ENCODE measurements at regions of chr13 and their contacts with region 1.

Region 1: DNA sequence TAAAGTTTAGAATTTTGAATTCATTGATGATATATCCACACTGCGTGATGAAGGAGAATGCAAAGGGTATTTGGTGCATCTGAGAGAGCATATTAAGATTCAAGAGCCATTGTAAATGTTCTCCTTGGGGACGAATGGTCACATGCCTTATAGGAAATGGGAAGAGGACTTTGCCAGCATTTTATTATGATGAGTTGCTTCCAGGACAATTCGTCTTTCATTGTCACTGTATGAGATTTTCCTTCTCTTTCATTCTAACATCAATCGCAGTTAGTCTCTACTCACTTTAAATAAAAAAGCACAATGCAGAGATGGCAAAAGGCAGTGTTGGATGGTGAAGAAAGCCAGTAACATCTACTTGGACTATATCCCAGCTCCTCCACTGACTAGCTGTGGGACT is 21.4 kb downstream of the WDFY2 start:
- DNase-seq: no peak
- ATAC-seq: no peak
- H3K4me3 ChIP-seq: no peak overlapping the region
- H3K27ac ChIP-seq: no peak overlapping the region
- H3K4me1 ChIP-seq: no peaks in the 10 kb centered on the region
- H3K27me3 ChIP-seq: no peaks in the 10 kb centered on the region
- CTCF ChIP-seq: no peak

Region 2: DNA sequence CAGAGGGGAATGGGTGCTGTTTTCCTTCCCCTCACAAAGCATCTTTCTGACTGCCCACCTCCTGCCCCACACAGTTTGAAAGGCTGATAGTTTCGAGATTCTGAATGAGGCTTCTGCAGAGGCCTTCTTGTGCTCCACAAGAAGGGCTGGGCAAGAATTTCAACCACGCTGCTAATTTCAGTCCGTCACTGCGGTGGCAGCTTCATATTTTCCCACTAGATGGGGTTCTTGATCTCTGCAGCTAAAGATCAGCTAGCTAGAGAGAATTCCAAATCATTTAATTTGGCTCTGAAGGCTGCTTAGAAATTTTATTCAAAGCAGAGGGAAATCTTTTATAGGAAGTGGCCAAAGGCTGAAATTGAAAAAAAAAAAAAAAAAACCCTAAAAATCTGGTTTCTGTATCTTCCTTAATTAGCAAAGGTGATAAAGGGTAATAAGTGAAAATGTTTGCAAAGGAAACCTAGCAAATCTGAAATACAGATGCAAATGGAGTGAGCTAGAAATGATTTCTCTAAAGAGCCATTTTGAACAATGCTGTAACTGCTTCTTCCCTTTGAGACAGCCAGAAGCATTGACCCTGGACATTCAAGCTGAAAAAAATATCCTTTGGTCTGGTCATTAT is 456.6 kb before region 1 on chr13:
- intact Hi-C with region 1: no loop called
- DNase-seq: no peak
- ATAC-seq: no peak
- H3K4me3 ChIP-seq: no peak overlapping the region
- H3K27ac ChIP-seq: no peak overlapping the region
- H3K4me1 ChIP-seq: no peaks in the 10 kb centered on the region
- H3K27me3 ChIP-seq: no peaks in the 10 kb centered on the region
- CTCF ChIP-seq: peak; percentile 48

Region 3: GRCh38 chr13:51577680-51578079 is 28.0 kb before region 1 on chr13:
- intact Hi-C with region 1: loop called in 1 of 2 experiments (anchors 2 kb)
- DNase-seq: no peak
- ATAC-seq: no peak
- H3K4me3 ChIP-seq: no peak overlapping the region
- H3K27ac ChIP-seq: no peak overlapping the region
- H3K4me1 ChIP-seq: no peaks in the 10 kb centered on the region
- H3K27me3 ChIP-seq: no peaks in the 10 kb centered on the region
- CTCF ChIP-seq: no peak